ENCODE measurements at regions of chr2 and their contacts with region 1.

Region 1: GRCh38 chr2:219057709-219058540 is 2.8 kb downstream of the IHH start:
- DNase-seq: peak; percentile 77 to 89 (median 89)
- ATAC-seq: peak; percentile 91 to 94
- H3K4me3 ChIP-seq: no peak overlapping the region
- H3K27ac ChIP-seq: no peak overlapping the region
- H3K4me1 ChIP-seq: peaks cover 6% of the 10 kb centered on the region
- H3K27me3 ChIP-seq: no peaks in the 10 kb centered on the region

Region 2: DNA sequence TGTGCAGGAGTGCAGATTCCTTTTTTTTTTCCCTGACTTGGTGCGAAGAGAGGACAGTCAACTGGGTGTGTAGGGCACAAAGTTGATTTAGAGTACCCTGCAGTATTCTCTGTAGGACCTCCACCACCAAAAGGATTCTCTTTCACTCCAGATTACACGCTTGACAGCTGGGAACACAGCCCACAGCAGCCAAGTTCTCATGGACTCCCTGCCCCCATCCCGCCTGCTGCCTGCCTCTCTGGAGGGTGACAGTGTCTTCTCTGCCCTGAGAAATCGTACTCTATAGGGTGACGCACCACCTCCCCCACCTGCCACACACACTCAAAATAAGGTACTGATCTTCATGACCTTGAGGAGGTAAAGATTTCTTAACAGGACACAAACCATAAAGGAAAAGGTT is 29.4 kb after region 1 on chr2:
- intact Hi-C with region 1: no loop called
- DNase-seq: no peak
- ATAC-seq: no peak
- H3K4me3 ChIP-seq: no peak overlapping the region
- H3K27ac ChIP-seq: no peak overlapping the region
- H3K4me1 ChIP-seq: peaks cover 2% of the 10 kb centered on the region
- H3K27me3 ChIP-seq: no peaks in the 10 kb centered on the region

Region 3: GRCh38 chr2:219119422-219120043 is 61.6 kb after region 1 on chr2:
- intact Hi-C with region 1: loop called (anchors 1 to 5 kb)
- DNase-seq: peak; percentile 64 to 83 (median 65)
- ATAC-seq: peak; percentile 61 to 75
- H3K4me3 ChIP-seq: no peak overlapping the region
- H3K27ac ChIP-seq: no peak overlapping the region
- H3K4me1 ChIP-seq: peaks cover 6% of the 10 kb centered on the region
- H3K27me3 ChIP-seq: no peaks in the 10 kb centered on the region

Region 4: DNA sequence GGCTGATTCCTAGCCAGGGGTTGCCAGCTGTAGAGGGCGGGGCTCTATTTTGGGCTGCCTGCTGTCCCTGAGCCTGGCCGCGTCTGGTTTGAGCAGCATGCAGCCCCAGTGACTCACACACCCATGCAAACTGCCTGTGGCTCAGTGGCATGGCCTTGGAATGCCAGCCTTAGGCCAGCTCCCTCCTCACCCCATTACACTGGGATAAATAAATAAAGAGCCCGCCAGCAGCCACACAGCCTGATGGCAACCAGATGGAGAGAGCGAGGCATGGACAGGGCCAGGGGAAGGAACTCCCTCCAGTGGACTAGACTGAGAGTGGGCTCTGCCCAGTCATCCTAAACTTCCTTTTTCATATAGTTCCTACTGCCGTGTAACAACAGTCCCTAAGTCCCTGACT is 84.4 kb after region 1 on chr2:
- intact Hi-C with region 1: loop called in 1 of 4 experiments (anchors 10 kb)
- DNase-seq: no peak
- ATAC-seq: peak in 1 of 2 donors; percentile 38
- H3K4me3 ChIP-seq: no peak overlapping the region
- H3K27ac ChIP-seq: no peak overlapping the region
- H3K4me1 ChIP-seq: no peaks in the 10 kb centered on the region
- H3K27me3 ChIP-seq: no peaks in the 10 kb centered on the region

Region 5: DNA sequence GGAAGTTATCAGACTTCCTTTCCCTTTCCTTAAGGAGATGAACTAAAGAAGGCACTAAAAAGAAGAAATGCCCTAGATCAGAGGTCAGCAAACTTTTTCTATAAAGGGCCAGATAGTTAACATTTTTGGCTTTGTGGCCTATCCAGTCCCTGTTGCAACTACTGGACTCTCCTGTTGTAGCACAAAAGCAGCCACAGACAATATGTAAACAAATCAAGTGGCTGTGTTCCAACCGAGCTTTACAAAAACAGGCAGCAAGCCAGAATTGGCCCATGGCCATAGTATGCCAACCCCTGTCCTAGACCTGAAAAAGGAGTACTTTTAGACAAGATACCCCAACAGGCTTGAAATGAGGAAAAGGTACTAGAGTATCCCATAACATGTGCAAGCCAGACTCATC is 91.7 kb after region 1 on chr2:
- intact Hi-C with region 1: loop called in 3 of 4 experiments (anchors 2 to 10 kb)
- DNase-seq: no peak
- ATAC-seq: no peak
- H3K4me3 ChIP-seq: no peak overlapping the region
- H3K27ac ChIP-seq: no peak overlapping the region
- H3K4me1 ChIP-seq: no peaks in the 10 kb centered on the region
- H3K27me3 ChIP-seq: no peaks in the 10 kb centered on the region

Region 6: GRCh38 chr2:219155054-219155644 is 97.2 kb after region 1 on chr2:
- intact Hi-C with region 1: loop called in 2 of 4 experiments (anchors 2 kb)
- DNase-seq: peak in 1 of 3 donors; percentile 42
- ATAC-seq: peak; percentile 52 to 53
- H3K4me3 ChIP-seq: no peak overlapping the region
- H3K27ac ChIP-seq: no peak overlapping the region
- H3K4me1 ChIP-seq: no peaks in the 10 kb centered on the region
- H3K27me3 ChIP-seq: no peaks in the 10 kb centered on the region

Measured in right cardiac atrium (tissue), 5 donors.